Ovary (tissue), 10 donors: ENCODE measurements at regions of chr14 and their contacts with region 1.

Region 1: DNA sequence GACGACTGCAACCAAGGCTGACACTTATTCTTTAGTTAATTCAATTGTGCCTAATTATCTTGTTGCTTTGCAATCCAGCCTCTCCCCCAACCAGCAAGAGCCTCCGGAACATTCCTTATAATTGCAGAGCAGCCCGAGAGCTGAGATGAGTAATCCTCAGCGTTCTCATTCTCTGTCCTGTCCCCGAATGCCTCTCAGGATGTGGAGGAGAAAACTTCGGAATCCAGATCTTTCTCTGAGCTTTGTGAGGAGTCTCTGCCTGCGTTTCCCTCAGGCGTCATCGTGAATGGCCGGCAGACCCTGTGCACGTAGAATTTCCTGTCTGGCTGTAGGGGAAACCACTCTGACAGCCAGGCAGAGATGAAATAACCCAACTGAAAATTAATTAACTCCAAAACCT is 160.5 kb upstream of the DIO3 start:
- DNase-seq: peak in 1 of 5 donors; percentile 36
- H3K4me3 ChIP-seq: no peak overlapping the region
- H3K27ac ChIP-seq: peak overlapping the region in 1 of 2 donors; percentile 46
- H3K4me1 ChIP-seq: peaks cover 12% of the 10 kb centered on the region
- H3K27me3 ChIP-seq: no peaks in the 10 kb centered on the region
- CTCF ChIP-seq: no peak
- EP300 ChIP-seq: no peak
- POLR2A ChIP-seq: no peak

Region 2: DNA sequence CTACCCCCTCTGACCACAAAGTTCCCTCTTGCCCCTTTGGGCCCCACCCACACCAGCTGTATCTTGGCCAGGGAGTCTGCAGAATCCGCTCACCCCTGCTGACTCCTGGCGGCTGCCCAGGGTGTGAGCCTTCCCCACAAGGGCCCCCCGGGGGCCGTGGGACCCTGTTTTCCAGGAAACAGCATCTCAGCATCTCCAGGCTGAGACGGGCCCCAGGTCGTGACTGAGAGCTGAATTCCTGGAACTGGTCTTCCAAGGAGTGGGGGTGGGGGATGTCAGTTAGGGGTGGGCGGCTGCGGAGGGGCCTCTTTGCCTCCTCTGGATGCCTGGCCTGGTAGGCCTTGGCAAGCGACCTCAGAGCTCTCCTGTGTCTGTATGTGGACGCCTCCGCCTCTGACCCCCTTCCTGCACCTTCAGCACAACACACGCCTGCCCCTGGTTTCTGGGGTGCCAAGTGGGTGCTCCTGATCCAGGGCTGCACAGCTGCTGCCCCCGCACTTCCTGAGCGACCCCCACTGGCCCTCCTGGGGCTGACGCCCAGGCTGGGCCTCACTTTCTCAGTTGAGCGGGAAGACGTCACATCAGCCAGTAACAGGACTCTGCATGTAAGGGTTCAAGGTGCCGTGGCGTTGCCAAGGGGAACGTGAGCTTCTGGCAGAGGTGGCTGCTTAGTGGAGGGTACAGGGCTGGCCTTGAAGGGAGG is 175.2 kb before region 1 on chr14:
- intact Hi-C with region 1: loop called in 1 of 4 experiments (anchors 1 kb)
- DNase-seq: peak in 1 of 5 donors; percentile 57
- H3K4me3 ChIP-seq: no peak overlapping the region
- H3K27ac ChIP-seq: no peak overlapping the region
- H3K4me1 ChIP-seq: peaks cover 3% of the 10 kb centered on the region
- H3K27me3 ChIP-seq: no peaks in the 10 kb centered on the region
- CTCF ChIP-seq: no peak
- EP300 ChIP-seq: no peak
- POLR2A ChIP-seq: no peak

Region 3: GRCh38 chr14:101254805-101255764 is 145.7 kb before region 1 on chr14:
- intact Hi-C with region 1: no loop called
- DNase-seq: peak in 3 of 5 donors; percentile 40 to 74 (median 47)
- H3K4me3 ChIP-seq: no peak overlapping the region
- H3K27ac ChIP-seq: no peak overlapping the region
- H3K4me1 ChIP-seq: peaks cover 1% of the 10 kb centered on the region
- H3K27me3 ChIP-seq: no peaks in the 10 kb centered on the region
- CTCF ChIP-seq: no peak
- EP300 ChIP-seq: no peak
- POLR2A ChIP-seq: no peak